PC-3 (cell line): ENCODE measurements at regions of chr11 and their contacts with region 1.

Region 1: GRCh38 chr11:66069715-66070603 is at the start of gene PACS1:
- DNase-seq: peak; percentile 81
- ATAC-seq: peak; percentile 73
- H3K4me3 ChIP-seq: peak within 1 kb of the TSS; percentile 83
- H3K27ac ChIP-seq: no peak within 1 kb of the TSS
- H3K4me1 ChIP-seq: peaks cover 25% of the 10 kb centered on the region
- H3K27me3 ChIP-seq: no peaks in the 10 kb centered on the region
- CTCF ChIP-seq: no peak; the same call in 1 of the 2 replicates
- total RNA-seq, gene PACS1: 28.7 and 31.5 TPM in 2 replicates

Region 2: DNA sequence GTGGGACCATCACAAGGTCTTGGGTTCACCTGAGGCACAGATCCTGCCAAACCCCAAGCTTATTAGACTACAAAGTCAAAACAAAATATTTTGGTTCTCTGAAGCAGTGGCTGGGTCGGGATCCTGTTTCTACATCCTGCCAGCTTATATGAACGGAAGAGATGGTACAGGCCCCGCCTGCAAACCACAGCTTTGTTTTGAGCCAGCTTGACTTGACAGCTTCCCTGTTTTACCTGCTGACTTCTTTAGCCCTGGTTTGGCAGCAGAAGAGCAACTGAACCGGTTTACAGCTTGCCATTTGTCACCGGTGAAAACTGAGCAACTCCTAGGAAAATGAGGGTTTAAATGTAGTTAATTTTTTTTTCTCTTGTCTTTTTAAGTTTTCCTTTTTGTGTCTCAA is 11.5 kb after region 1 on chr11:
- CTCF ChIA-PET with region 1: interaction called, 4 read pairs
- POLR2A ChIA-PET with region 1: interaction called, 27 read pairs
- intact Hi-C with region 1: no loop called
- DNase-seq: peak; percentile 91
- ATAC-seq: peak; percentile 81
- H3K4me3 ChIP-seq: peak overlapping the region; percentile 46
- H3K27ac ChIP-seq: peak overlapping the region; percentile 17
- H3K4me1 ChIP-seq: peaks cover 41% of the 10 kb centered on the region
- H3K27me3 ChIP-seq: no peaks in the 10 kb centered on the region
- CTCF ChIP-seq: no peak

Region 3: DNA sequence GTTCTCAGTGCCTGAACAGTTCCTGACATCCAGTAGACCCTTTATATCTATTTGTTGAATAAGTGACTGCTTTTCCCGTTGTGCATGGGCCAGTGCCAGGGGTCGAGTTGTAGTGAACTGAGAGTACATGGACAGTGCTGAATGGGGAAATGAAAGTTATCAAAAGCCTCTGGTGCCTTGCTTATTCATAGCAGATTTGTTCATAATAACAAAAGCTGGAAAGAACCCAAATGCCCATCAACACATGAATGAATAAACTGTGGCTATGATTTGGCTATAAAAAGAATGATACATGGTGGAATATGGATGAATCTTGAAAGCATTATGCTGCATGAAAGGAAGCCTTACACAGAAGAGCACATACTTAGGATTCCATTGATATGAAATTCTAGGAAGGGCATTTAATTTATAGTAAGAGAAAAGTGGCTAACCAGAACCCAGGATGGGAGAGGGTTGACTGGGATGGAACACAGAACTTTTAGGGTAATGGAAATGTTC is 42.7 kb after region 1 on chr11:
- CTCF ChIA-PET with region 1: no interaction called
- POLR2A ChIA-PET with region 1: interaction called, 3 read pairs
- intact Hi-C with region 1: loop called (anchors 5 kb)
- DNase-seq: peak; percentile 92
- ATAC-seq: peak; percentile 57
- H3K4me3 ChIP-seq: peak overlapping the region; percentile 54
- H3K27ac ChIP-seq: peak overlapping the region; percentile 95
- H3K4me1 ChIP-seq: peaks cover 57% of the 10 kb centered on the region
- H3K27me3 ChIP-seq: no peaks in the 10 kb centered on the region
- CTCF ChIP-seq: no peak

Region 4: DNA sequence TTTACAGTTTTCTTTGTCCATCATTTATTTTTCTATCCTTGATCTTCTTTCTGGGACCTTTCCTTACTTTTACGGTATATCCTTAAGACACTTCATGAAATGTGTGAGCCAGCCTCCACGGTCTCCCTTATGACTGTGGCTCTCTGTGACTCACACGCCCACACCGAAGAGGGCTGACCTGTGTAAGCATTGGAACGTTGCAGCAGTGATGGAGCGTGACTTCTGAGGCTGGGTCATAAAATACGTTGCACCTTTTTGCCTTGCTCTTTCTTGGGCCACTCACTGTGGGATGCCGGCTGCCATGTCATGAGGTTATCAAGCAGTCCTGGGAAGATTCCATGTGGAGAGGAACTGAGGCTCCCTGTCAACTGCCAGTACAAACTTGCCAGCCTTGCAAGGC is 102.2 kb after region 1 on chr11:
- CTCF ChIA-PET with region 1: no interaction called
- POLR2A ChIA-PET with region 1: no interaction called
- intact Hi-C with region 1: no loop called
- DNase-seq: no peak
- ATAC-seq: peak; percentile 48
- H3K4me3 ChIP-seq: no peak overlapping the region
- H3K27ac ChIP-seq: no peak overlapping the region
- H3K4me1 ChIP-seq: peaks cover 7% of the 10 kb centered on the region; the same call in 1 of the 2 replicates
- H3K27me3 ChIP-seq: no peaks in the 10 kb centered on the region
- CTCF ChIP-seq: no peak